ENCODE measurements at regions of chr3 and their contacts with region 1.

Region 1: GRCh38 chr3:170811928-170812591 is 57.9 kb downstream of the RPL22L1 start:
- DNase-seq: peak; percentile 86
- H3K4me3 Mint-ChIP-seq: no peak overlapping the region
- H3K27ac Mint-ChIP-seq: peak overlapping the region; percentile 16
- H3K4me1 Mint-ChIP-seq: peaks cover 46% of the 10 kb centered on the region
- H3K27me3 Mint-ChIP-seq: no peaks in the 10 kb centered on the region
- CTCF ChIP-seq: peak; percentile 99

Region 2: DNA sequence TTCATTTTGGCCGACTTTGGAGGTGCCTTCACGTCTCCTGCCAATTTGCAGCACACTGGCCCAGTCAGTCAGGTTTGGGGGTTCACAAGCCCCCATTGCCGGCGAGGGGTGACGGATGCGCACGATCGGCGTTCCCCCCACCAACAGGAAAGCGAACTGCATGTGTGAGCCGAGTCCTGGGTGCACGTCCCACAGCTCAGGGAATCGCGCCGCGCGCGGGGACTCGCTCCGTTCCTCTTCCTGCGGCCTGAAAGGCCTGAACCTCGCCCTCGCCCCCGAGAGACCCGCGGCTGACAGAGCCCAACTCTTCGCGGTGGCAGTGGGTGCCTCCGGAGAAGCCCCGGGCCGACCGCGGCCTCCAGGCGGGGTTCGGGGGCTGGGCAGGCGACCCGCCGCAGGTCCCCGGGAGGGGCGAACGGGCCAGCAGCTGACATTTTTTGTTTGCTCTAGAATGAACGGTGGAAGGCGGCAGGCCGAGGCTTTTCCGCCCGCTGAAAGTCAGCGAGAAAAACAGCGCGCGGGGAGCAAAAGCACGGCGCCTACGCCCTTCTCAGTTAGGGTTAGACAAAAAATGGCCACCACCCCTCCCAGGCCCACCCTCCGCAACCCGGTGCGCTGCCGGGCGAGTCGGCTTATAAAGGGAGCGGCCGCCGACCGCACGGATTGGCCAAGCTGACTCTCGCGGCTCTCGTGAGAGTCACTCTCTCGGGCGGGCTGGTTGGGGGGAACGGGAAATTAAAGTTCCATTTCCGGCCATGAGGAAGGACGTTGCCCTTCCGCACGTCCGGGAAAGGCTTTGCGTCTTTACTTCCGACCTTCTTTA is 1047.4 kb before region 1 on chr3 and contains the start of gene TERC:
- CTCF ChIA-PET with region 1: no interaction called
- intact Hi-C with region 1: loop called (anchors 5 kb)
- DNase-seq: peak; percentile 89
- H3K4me3 Mint-ChIP-seq: peak within 1 kb of the TSS; percentile 91
- H3K27ac Mint-ChIP-seq: peak within 1 kb of the TSS; percentile 79
- H3K4me1 Mint-ChIP-seq: peaks cover 11% of the 10 kb centered on the region
- H3K27me3 Mint-ChIP-seq: no peaks in the 10 kb centered on the region
- CTCF ChIP-seq: no peak
- total RNA-seq, gene TERC: 4.7 and 11.0 TPM in 2 replicates

Region 3: DNA sequence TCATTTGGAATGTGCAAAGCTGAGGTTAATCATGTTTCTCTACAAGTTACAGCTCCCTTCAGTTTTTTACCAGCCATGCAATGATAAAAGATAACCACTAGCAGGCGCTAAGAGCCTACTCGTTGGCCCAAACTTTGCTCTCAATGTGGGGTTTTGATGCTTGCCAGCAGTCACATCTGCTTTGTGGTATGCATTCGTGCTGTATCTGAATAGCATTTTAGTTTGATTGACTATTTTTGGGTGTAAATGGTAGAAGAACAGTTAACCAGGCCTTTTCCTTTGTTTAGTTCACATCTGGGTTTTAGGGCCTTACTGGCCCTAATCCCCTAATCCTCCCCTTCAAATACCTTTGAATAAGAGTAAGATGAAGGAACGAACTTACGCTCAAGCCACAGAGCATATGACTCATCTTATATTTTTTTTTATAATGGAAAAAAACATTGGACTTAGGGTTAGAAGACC is 397.8 kb before region 1 on chr3:
- CTCF ChIA-PET with region 1: interaction called, 168 read pairs
- intact Hi-C with region 1: loop called (anchors 1 kb)
- DNase-seq: peak; percentile 55
- H3K4me3 Mint-ChIP-seq: no peak overlapping the region
- H3K27ac Mint-ChIP-seq: no peak overlapping the region
- H3K4me1 Mint-ChIP-seq: peaks cover 8% of the 10 kb centered on the region
- H3K27me3 Mint-ChIP-seq: no peaks in the 10 kb centered on the region
- CTCF ChIP-seq: peak; percentile 97

Region 4: GRCh38 chr3:170499565-170500156 is 312.4 kb before region 1 on chr3:
- CTCF ChIA-PET with region 1: interaction called, 7 read pairs
- intact Hi-C with region 1: loop called (anchors 5 kb)
- DNase-seq: peak; percentile 65
- H3K4me3 Mint-ChIP-seq: no peak overlapping the region
- H3K27ac Mint-ChIP-seq: no peak overlapping the region
- H3K4me1 Mint-ChIP-seq: peaks cover 14% of the 10 kb centered on the region
- H3K27me3 Mint-ChIP-seq: peaks cover 8% of the 10 kb centered on the region
- CTCF ChIP-seq: peak; percentile 78

Region 5: GRCh38 chr3:170689893-170690660 is 122.0 kb before region 1 on chr3:
- CTCF ChIA-PET with region 1: interaction called, 8 read pairs
- intact Hi-C with region 1: loop called (anchors 5 kb)
- DNase-seq: peak; percentile 87
- H3K4me3 Mint-ChIP-seq: no peak overlapping the region
- H3K27ac Mint-ChIP-seq: no peak overlapping the region
- H3K4me1 Mint-ChIP-seq: no peaks in the 10 kb centered on the region
- H3K27me3 Mint-ChIP-seq: no peaks in the 10 kb centered on the region
- CTCF ChIP-seq: peak; percentile 86

Measured in Calu3 (cell line).